ENCODE measurements at regions of chr14 and their contacts with region 1.

Region 1: GRCh38 chr14:89973234-89973823 is 17.6 kb downstream of the TDP1 start:
- DNase-seq: peak; percentile 67
- H3K4me3 Mint-ChIP-seq: no peak overlapping the region
- H3K27ac Mint-ChIP-seq: no peak overlapping the region
- H3K4me1 Mint-ChIP-seq: peaks cover 8% of the 10 kb centered on the region
- H3K27me3 Mint-ChIP-seq: no peaks in the 10 kb centered on the region

Region 2: GRCh38 chr14:89936658-89937185 is 36.6 kb before region 1 on chr14:
- CTCF ChIA-PET with region 1: interaction called, 40 read pairs
- POLR2A ChIA-PET with region 1: no interaction called
- intact Hi-C with region 1: no loop called
- DNase-seq: no peak
- H3K4me3 Mint-ChIP-seq: no peak overlapping the region
- H3K27ac Mint-ChIP-seq: no peak overlapping the region
- H3K4me1 Mint-ChIP-seq: peaks cover 6% of the 10 kb centered on the region
- H3K27me3 Mint-ChIP-seq: no peaks in the 10 kb centered on the region

Region 3: DNA sequence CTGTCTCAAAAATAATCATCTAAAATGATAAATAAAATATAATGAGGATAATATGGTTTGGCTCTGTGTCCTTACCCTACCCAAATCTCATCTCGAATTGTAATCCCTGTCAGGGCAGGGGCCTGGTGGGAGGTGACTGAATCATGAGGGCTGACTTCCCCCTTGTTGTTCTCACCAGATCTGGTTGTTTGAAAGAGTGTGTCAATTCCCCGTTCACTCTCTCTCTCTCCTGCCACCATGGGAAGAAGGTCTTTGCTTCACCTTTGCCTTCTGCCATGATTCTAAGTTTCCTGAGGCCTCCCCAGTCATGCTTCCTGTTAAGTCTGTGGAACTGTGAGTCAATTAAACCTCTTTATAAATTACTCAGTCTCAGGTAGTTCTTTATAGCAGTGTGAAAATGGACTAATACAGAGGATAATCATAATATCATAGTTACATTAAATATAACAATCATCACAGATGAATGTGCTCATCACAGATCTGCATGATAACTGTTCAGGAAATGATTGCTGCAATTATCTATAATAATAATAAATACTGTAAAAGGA is 31.4 kb before region 1 on chr14:
- CTCF ChIA-PET with region 1: interaction called, 40 read pairs
- POLR2A ChIA-PET with region 1: no interaction called
- intact Hi-C with region 1: no loop called
- DNase-seq: peak; percentile 21
- H3K4me3 Mint-ChIP-seq: no peak overlapping the region
- H3K27ac Mint-ChIP-seq: no peak overlapping the region
- H3K4me1 Mint-ChIP-seq: peaks cover 5% of the 10 kb centered on the region
- H3K27me3 Mint-ChIP-seq: no peaks in the 10 kb centered on the region

Region 4: DNA sequence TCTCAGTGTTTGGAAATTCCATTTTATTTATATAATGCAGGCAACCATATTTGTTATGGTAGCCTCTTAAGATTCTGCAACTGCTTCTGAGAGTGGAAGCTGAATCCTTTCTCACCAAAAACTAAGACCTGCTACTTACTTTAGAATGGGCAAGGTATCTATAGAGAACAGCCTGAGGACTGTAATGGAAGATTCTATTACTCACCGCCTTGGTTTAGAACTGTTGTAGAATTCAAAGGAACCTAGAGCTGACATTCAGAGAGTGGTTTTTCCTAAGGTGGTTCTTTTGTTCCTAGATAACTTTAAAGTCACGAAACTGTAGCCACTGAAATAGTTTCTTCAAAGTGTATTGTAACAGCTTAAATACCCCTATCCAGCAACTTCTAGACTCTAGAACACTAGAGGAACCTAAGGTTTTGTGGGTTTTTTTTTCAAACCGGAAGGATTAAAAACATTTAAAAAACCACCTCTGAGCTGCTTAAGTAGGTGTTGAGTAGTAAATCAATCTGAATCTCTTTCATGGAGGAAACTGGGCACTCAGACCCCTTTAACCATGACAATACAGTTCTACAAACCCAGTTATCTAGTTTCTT is 13.4 kb before region 1 on chr14:
- CTCF ChIA-PET with region 1: interaction called, 27 read pairs
- POLR2A ChIA-PET with region 1: no interaction called
- intact Hi-C with region 1: no loop called
- DNase-seq: no peak
- H3K4me3 Mint-ChIP-seq: no peak overlapping the region
- H3K27ac Mint-ChIP-seq: peak overlapping the region; percentile 76
- H3K4me1 Mint-ChIP-seq: peaks cover 67% of the 10 kb centered on the region
- H3K27me3 Mint-ChIP-seq: no peaks in the 10 kb centered on the region

Region 5: GRCh38 chr14:89986462-89987160 is 13.3 kb after region 1 on chr14:
- CTCF ChIA-PET with region 1: interaction called, 21 read pairs
- POLR2A ChIA-PET with region 1: no interaction called
- intact Hi-C with region 1: no loop called
- DNase-seq: no peak
- H3K4me3 Mint-ChIP-seq: no peak overlapping the region
- H3K27ac Mint-ChIP-seq: no peak overlapping the region
- H3K4me1 Mint-ChIP-seq: no peaks in the 10 kb centered on the region
- H3K27me3 Mint-ChIP-seq: no peaks in the 10 kb centered on the region

Region 6: DNA sequence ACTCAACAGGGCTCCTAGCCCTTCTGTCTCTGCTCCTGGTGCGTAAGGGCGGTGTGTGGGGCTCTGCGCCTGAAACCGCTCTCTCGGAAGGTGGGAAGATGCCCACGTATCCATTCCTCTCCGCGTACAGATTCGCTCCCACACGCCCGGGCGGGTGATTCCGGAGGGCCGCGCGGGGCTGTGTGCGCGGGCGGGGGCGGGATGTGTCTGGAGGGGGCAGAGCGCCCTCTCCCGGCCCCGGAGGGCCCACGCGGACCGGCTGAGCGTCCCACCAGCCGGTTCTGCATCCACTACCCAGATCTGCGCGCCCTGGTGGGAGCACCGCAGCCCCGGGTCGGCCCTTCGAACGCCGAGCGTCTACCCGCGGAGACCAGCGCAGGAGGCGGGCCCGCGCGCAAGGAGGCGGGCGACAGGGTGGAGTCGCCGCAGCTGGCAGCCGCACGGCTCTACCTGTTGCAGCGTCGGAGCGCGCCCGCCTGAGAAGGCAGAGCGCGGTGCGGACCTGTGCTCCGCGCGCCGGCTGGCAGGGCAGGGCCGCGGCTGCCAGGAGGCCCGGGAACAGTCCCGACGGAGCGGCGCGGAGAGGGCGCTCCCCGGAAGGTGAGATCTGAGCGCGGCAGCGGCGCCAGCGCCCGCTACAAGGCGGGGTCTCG is 87.1 kb after region 1 on chr14:
- CTCF ChIA-PET with region 1: interaction called, 10 read pairs
- POLR2A ChIA-PET with region 1: no interaction called
- intact Hi-C with region 1: loop called (anchors 5 kb)
- DNase-seq: peak; percentile 68
- H3K4me3 Mint-ChIP-seq: peak overlapping the region; percentile 53
- H3K27ac Mint-ChIP-seq: no peak overlapping the region
- H3K4me1 Mint-ChIP-seq: peaks cover 19% of the 10 kb centered on the region
- H3K27me3 Mint-ChIP-seq: peaks cover 57% of the 10 kb centered on the region

Region 7: DNA sequence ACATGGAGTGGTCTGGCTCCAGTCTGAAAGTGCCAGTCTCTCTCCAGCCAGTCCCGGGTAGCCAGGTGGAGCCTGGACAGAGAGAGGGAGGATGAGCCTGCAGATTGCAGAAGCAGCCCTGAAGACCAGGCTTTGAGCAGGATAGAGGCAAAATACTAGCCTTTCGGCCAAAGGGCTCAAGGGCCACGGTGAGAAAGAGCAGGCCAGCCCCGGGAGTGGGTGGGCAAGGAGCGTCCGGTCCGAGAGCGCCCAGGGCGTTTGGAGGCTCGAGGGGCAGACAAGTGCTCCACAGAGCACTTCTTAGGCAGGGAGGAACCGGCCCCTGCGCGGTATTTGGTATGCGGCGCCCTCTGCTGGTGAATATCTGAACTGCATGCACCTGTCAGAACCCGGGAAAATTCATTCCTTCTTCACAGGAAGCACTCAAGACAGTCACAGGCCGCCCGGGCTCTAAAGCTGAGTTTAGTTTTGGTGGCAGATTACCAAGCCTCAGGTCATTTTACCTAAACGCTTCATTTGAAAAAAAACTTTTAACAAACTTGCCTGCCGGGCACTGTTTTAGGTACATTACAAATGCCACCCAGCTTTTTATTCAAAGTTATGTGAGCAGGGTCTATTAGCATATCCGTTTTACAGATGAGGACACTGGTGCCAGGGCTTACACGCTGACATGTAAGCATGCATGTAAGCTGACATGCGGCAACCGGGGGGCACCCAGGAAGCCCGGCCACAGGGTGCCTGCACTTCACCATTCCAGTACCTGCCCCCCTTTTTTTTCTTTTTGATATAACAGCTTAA is 262.0 kb after region 1 on chr14:
- CTCF ChIA-PET with region 1: interaction called, 31 read pairs
- POLR2A ChIA-PET with region 1: no interaction called
- intact Hi-C with region 1: loop called (anchors 1 kb)
- DNase-seq: peak; percentile 81
- H3K4me3 Mint-ChIP-seq: no peak overlapping the region
- H3K27ac Mint-ChIP-seq: no peak overlapping the region
- H3K4me1 Mint-ChIP-seq: no peaks in the 10 kb centered on the region
- H3K27me3 Mint-ChIP-seq: peaks cover 10% of the 10 kb centered on the region

Region 8: GRCh38 chr14:90331497-90332435 is 358.4 kb after region 1 on chr14 and contains the start of gene NRDE2:
- CTCF ChIA-PET with region 1: no interaction called
- POLR2A ChIA-PET with region 1: no interaction called
- intact Hi-C with region 1: no loop called
- DNase-seq: peak; percentile 99
- H3K4me3 Mint-ChIP-seq: peak within 1 kb of the TSS; percentile 88
- H3K27ac Mint-ChIP-seq: peak within 1 kb of the TSS; percentile 91
- H3K4me1 Mint-ChIP-seq: peaks cover 26% of the 10 kb centered on the region
- H3K27me3 Mint-ChIP-seq: peaks cover 3% of the 10 kb centered on the region
- total RNA-seq, gene NRDE2: 18.9 to 24.8 TPM

Measured in activated CD4-positive, alpha-beta memory T cell treated with anti-CD3 and anti-CD28 coated beads for 36 hours (primary cell).